ENCODE measurements at regions of chr14 and their contacts with region 1.

Region 1: GRCh38 chr14:55160989-55161388 is 30.4 kb downstream of the DLGAP5 start:
- DNase-seq: peak; percentile 8
- ATAC-seq: no peak
- H3K4me3 ChIP-seq: no peak overlapping the region
- H3K27ac ChIP-seq: no peak overlapping the region
- H3K4me1 ChIP-seq: peaks cover 7% of the 10 kb centered on the region; the same call in 1 of the 2 replicates
- H3K27me3 ChIP-seq: no peaks in the 10 kb centered on the region
- CTCF ChIP-seq: peak; percentile 48
- EP300 ChIP-seq: no peak
- POLR2A ChIP-seq: no peak
- RAD21 ChIP-seq: no peak

Region 2: DNA sequence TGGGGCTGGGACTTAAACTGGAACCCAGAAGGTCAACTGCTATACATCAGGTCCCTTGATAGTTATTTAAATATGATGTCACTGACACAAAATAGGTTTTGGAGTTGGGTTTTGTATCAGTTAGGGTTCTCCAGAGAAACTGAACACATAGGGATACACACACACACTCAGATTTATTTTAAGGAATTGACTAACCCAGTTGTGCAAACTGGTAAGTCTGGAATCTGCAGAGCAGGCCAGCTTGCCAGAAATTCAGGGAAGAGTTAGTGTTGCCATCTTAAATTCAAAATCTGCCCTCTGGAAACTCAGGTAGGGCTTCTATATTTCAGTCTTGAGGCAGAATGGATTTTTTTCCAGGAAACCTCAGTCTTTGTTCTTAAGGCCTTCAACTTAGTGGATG is 72.6 kb before region 1 on chr14:
- CTCF ChIA-PET with region 1: interaction called, 74 read pairs
- POLR2A ChIA-PET with region 1: interaction called, 4 read pairs
- in situ Hi-C with region 1: loop called (anchors 5 kb)
- intact Hi-C with region 1: loop called (anchors 1 kb)
- DNase-seq: no peak
- ATAC-seq: no peak
- H3K4me3 ChIP-seq: no peak overlapping the region
- H3K27ac ChIP-seq: no peak overlapping the region
- H3K4me1 ChIP-seq: 0 out of 2 replicates have a peak, but pooled peaks cover 4% of the 10 kb centered on the region
- H3K27me3 ChIP-seq: no peaks in the 10 kb centered on the region
- CTCF ChIP-seq: no peak
- EP300 ChIP-seq: no peak
- POLR2A ChIP-seq: no peak
- RAD21 ChIP-seq: no peak

Region 3: DNA sequence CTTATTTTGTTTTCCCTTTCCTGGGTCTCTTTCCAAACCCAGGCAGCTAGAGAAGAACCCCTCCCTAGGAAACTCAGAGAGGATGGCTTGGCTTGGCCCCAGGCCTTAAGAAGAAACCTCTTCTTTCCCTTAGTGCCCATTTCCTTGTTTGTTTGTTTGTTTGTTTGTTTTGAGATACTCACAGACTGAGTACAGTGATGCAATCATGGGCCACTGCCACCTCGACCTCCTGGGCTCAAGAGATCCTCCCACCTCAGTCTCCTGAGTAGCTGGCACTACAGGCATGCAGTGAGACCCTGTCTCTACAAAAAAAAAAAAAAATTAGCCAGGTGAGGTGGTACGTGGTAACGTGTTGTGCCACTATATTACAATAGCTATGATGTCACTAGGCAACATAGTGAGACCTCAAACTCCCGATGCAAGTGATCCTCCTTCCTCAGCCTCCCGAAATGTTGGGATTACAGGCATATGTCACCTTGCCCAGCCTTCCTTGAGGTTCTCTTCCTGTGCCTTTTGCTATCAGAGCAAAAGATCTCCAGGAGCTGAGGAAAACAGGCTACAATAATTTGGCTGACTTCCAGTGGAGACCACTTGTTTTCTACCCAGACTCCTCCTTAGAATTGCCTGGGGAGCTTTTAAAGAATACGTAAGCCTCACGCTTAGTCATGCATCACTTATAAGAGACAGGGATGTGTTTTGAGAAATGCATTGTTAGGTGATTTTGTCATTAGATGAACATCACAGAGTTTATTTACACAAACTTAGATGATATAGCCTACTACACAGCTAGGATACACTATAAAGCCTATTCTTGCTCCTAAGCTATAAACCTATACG is 66.5 kb before region 1 on chr14:
- CTCF ChIA-PET with region 1: interaction called, 74 read pairs
- POLR2A ChIA-PET with region 1: interaction called, 4 read pairs
- in situ Hi-C with region 1: loop called (anchors 5 kb)
- intact Hi-C with region 1: loop called (anchors 1 kb)
- DNase-seq: no peak
- ATAC-seq: no peak
- H3K4me3 ChIP-seq: no peak overlapping the region
- H3K27ac ChIP-seq: no peak overlapping the region
- H3K4me1 ChIP-seq: peaks cover 8% of the 10 kb centered on the region; the same call in 1 of the 2 replicates
- H3K27me3 ChIP-seq: no peaks in the 10 kb centered on the region
- CTCF ChIP-seq: no peak
- EP300 ChIP-seq: no peak
- POLR2A ChIP-seq: no peak
- RAD21 ChIP-seq: no peak

Region 4: GRCh38 chr14:55514819-55515490 is 354.0 kb after region 1 on chr14:
- CTCF ChIA-PET with region 1: no interaction called
- POLR2A ChIA-PET with region 1: no interaction called
- in situ Hi-C with region 1: no loop called
- intact Hi-C with region 1: no loop called
- DNase-seq: no peak
- ATAC-seq: no peak
- H3K4me3 ChIP-seq: no peak overlapping the region
- H3K27ac ChIP-seq: no peak overlapping the region
- H3K4me1 ChIP-seq: no peaks in the 10 kb centered on the region
- H3K27me3 ChIP-seq: no peaks in the 10 kb centered on the region
- CTCF ChIP-seq: no peak
- EP300 ChIP-seq: no peak
- POLR2A ChIP-seq: no peak
- RAD21 ChIP-seq: no peak

Measured in HepG2 (cell line).